IMR-90 (cell line): ENCODE measurements at regions of chr22 and their contacts with region 1.

Region 1: DNA sequence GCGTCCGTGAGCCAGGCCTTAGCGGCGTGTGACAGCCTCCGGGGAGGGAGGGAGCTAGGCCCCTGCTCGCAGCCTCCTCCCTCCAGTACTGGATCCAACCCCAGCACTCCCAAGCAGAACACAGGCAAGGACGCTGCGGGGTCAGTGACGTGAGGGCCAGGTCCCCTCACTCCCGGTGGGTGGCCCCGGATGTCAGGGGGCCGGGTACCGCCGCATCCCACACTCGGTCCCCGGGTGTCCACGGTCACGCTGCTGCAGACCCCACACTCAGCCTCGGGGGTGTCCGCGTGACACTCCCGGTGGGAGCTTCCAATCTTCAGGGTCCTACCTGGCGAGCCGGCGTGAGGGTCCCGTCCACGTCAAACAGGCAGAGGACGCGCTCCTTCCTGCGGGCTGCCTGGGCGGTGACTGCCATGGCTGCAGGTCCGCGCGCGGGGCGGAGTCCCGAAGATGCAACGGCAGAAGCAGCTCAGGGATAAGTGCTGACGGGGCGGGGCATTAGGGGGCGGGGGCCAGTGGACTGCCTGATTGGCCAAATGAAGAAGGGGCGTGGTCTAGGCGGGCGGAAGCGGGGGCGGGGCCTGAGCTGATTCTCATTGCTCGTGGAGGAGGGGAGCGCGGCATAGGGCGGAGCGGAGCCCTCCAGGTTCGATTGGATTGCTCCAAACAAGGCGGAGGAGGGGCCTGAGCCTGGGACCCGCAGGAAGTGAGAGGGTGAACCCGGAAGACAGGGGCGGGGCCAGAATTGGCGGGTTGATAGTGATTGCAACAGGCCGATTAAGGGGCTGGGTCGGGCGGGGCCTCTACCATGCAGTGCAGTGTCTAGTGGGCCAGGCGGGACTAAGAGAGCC is at the start of gene PMM1:
- DNase-seq: peak; percentile 99
- ATAC-seq: peak; percentile 98
- H3K4me3 ChIP-seq: peak within 1 kb of the TSS; percentile 76
- H3K27ac ChIP-seq: peak within 1 kb of the TSS; percentile 73
- H3K4me1 ChIP-seq: peaks cover 4% of the 10 kb centered on the region
- H3K27me3 ChIP-seq: no peaks in the 10 kb centered on the region
- CTCF ChIP-seq: no peak
- POLR2A ChIP-seq: peak; percentile 88
- RAD21 ChIP-seq: no peak
- total RNA-seq, gene PMM1: 22.2 and 22.8 TPM in 2 replicates

Region 2: DNA sequence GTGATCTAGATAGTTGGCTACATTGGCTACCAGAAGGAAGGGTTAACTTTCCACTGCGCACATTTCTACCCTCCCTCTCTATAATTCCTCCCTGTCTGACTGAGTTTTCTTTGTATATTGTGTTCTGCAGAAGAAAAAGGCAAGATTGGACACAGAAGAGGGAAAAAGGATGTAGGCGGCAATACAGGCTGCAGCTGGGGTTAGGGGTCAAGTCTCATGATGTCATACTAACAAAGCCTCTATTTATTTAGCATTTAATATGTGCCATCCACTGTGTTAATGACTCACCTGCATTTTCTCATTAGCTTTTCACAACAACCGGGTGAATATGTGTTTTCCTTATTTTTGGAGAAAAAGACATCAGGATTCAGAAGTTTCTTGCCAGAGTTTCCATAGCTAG is 1592.9 kb before region 1 on chr22:
- CTCF ChIA-PET with region 1: no interaction called
- POLR2A ChIA-PET with region 1: interaction called, 10 read pairs
- dilution Hi-C with region 1: no loop called
- in situ Hi-C with region 1: no loop called
- intact Hi-C with region 1: no loop called
- DNase-seq: no peak
- ATAC-seq: no peak
- H3K4me3 ChIP-seq: no peak overlapping the region
- H3K27ac ChIP-seq: no peak overlapping the region
- H3K4me1 ChIP-seq: peaks cover 4% of the 10 kb centered on the region
- H3K27me3 ChIP-seq: peaks cover 52% of the 10 kb centered on the region
- CTCF ChIP-seq: no peak
- POLR2A ChIP-seq: no peak
- RAD21 ChIP-seq: no peak

Region 3: DNA sequence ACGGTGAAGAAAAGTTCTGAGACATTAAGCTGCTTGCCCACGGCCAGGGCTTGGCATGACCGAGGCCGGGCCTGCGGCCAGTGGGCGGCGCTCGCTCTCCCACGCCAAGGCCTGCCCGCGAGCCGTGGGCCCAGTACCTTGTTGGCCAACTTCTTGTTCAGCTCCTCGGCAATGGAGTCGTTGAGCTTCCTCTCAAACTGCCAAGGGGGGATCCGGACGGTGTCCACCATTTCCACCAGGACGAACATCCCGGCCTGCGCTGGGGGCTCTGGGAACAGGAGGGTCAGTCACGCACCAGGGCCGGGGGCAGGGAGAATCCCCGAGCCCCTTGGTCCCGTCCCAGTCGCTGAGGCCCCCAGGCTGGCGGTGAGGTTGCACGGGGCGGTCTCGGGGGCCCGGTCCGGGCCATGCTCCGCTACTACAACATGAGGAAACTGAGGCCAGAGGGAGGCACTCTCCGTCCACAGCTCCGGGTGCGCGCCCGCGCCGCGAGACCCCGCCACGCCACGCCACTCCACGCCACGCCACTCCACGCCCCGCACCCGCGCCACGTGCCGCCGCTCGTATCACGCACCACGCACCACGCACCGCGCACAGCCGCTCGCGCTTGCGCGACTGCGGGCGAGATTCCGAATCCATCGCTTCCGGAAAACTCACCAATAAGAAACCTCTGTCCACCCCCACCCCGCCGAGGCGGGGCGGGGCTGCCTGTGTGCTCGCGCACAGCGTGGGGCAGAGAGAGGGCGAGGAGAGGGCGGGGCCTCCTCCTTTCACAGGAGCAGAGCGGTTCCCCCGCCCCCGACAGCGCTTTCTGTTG is 45.6 kb before region 1 on chr22 and contains the start of gene POLR3H:
- CTCF ChIA-PET with region 1: interaction called, 10 read pairs
- POLR2A ChIA-PET with region 1: interaction called, 5 read pairs
- dilution Hi-C with region 1: no loop called
- in situ Hi-C with region 1: no loop called
- intact Hi-C with region 1: no loop called
- DNase-seq: peak; percentile 96
- ATAC-seq: peak; percentile 99
- H3K4me3 ChIP-seq: peak within 1 kb of the TSS; percentile 84
- H3K27ac ChIP-seq: peak within 1 kb of the TSS; percentile 93
- H3K4me1 ChIP-seq: peaks cover 11% of the 10 kb centered on the region
- H3K27me3 ChIP-seq: no peaks in the 10 kb centered on the region
- CTCF ChIP-seq: peak; percentile 65
- POLR2A ChIP-seq: peak; percentile 71
- RAD21 ChIP-seq: peak; percentile 66
- total RNA-seq, gene POLR3H: 37.8 and 39.7 TPM in 2 replicates

Region 4: GRCh38 chr22:41565403-41566054 is 24.1 kb before region 1 on chr22:
- CTCF ChIA-PET with region 1: no interaction called
- POLR2A ChIA-PET with region 1: interaction called, 12 read pairs
- dilution Hi-C with region 1: no loop called
- in situ Hi-C with region 1: no loop called
- intact Hi-C with region 1: no loop called
- DNase-seq: peak; percentile 89
- ATAC-seq: peak; percentile 64
- H3K4me3 ChIP-seq: no peak overlapping the region
- H3K27ac ChIP-seq: peak overlapping the region; percentile 83
- H3K4me1 ChIP-seq: peaks cover 20% of the 10 kb centered on the region
- H3K27me3 ChIP-seq: no peaks in the 10 kb centered on the region
- CTCF ChIP-seq: no peak
- POLR2A ChIP-seq: no peak
- RAD21 ChIP-seq: no peak